SK-N-SH (cell line): ENCODE measurements at regions of chr7 and their contacts with region 1.

Region 1: DNA sequence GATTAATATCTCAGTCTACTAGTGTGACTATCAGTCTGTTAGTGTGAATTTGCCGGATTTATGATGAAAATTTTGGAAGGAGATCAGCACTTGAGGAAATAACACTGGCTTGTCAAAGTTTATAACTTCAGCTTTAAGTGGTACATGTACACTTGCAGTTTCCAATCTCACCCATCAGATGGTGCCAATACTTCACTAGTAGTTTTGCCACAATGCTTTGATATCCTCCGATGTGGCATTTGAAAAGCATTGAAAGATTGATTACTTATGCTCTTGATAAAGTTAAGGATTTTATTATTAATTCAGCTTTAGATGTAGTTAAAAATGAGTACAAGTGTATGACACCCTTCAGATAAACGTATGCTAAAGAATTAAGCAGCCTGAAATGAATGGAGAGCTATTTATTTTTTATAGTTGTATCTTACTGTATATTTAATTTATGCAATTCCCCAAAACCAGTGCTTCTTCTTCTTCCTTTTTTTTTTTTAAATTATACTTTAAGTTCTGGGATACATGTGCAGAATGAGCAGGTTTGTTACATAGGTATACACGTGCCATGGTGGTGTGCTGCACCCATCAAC is 98.2 kb downstream of the ANLN start:
- DNase-seq: peak; percentile 63
- H3K4me3 ChIP-seq: no peak overlapping the region; a peak in 1 of 4 replicates
- H3K27ac ChIP-seq: no peak overlapping the region
- H3K4me1 ChIP-seq: 0 out of 4 replicates have a peak, but pooled peaks cover 0 to 2% of the 10 kb centered on the region in 2 experiments
- H3K27me3 ChIP-seq: no peaks in the 10 kb centered on the region
- CTCF ChIP-seq: peak; percentile 99
- EP300 ChIP-seq: peak in 1 of 2 experiments; percentile 14; a peak in 1 of 4 replicates
- RAD21 ChIP-seq: peak; percentile 100

Region 2: DNA sequence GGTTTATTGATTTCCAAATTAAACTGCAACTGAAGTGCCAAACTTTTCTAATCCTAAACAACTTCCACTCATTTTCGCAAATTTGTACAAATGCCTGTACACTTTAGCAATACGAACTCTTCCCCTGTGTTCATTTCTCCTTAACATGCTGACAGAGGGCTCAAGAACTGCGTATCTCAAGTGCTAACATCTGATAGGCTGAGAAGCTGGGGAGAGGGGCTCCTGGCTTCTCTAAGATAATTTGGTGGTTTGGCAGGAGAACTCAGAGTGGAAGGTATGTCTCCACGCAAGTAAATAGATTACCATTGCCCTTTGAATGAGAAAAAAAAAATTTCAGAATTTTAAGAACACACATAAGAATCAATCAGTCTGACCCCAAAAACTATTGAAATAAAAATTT is 151.5 kb before region 1 on chr7:
- CTCF ChIA-PET with region 1: no interaction called
- POLR2A ChIA-PET with region 1: no interaction called
- DNase-seq: no peak
- H3K4me3 ChIP-seq: no peak overlapping the region
- H3K27ac ChIP-seq: no peak overlapping the region
- H3K4me1 ChIP-seq: no peaks in the 10 kb centered on the region
- H3K27me3 ChIP-seq: no peaks in the 10 kb centered on the region
- CTCF ChIP-seq: no peak
- EP300 ChIP-seq: no peak
- RAD21 ChIP-seq: no peak

Region 3: DNA sequence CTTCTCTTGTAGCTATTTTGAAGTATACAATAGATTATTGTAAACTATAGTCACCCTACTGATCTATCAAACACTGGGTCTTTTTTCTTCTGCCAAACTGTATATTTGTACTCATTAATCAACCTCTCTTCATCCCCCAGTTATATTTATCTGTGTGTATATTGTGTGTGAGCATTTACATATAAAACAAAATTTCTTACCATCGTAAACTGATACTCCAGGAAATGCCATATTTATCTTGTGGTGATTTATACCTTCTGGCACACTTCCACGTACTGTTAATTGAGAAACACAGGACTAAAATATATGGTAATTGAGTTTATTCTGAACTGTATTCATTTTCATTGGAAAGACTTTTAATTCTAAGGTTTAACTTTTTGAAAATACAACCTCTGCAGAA is 79.3 kb before region 1 on chr7:
- CTCF ChIA-PET with region 1: no interaction called
- POLR2A ChIA-PET with region 1: no interaction called
- DNase-seq: no peak
- H3K4me3 ChIP-seq: no peak overlapping the region
- H3K27ac ChIP-seq: peak overlapping the region in 1 of 2 experiments; percentile 29; a peak in 1 of 4 replicates
- H3K4me1 ChIP-seq: peaks cover 15 to 19% of the 10 kb centered on the region in 2 experiments; a peak in 3 of 4 replicates
- H3K27me3 ChIP-seq: no peaks in the 10 kb centered on the region
- CTCF ChIP-seq: no peak
- EP300 ChIP-seq: no peak
- RAD21 ChIP-seq: no peak

Region 4: GRCh38 chr7:36473454-36474282 is 14.2 kb before region 1 on chr7:
- CTCF ChIA-PET with region 1: interaction called, 24 read pairs
- POLR2A ChIA-PET with region 1: no interaction called
- DNase-seq: peak; percentile 57
- H3K4me3 ChIP-seq: no peak overlapping the region
- H3K27ac ChIP-seq: no peak overlapping the region
- H3K4me1 ChIP-seq: peaks cover 6 to 14% of the 10 kb centered on the region in 2 experiments
- H3K27me3 ChIP-seq: no peaks in the 10 kb centered on the region
- CTCF ChIP-seq: peak; percentile 60
- EP300 ChIP-seq: no peak
- RAD21 ChIP-seq: peak; percentile 86

Region 5: GRCh38 chr7:36659172-36659516 is 171.3 kb after region 1 on chr7:
- CTCF ChIA-PET with region 1: interaction called, 11 read pairs
- POLR2A ChIA-PET with region 1: no interaction called
- DNase-seq: no peak
- H3K4me3 ChIP-seq: 0 out of 4 replicates have a peak overlapping the region, but pooled peaks of 1 of the 2 experiments have one; percentile 4
- H3K27ac ChIP-seq: peak overlapping the region in 1 of 2 experiments; percentile 85; a peak in 3 of 4 replicates
- H3K4me1 ChIP-seq: peaks cover 14 to 18% of the 10 kb centered on the region in 2 experiments
- H3K27me3 ChIP-seq: no peaks in the 10 kb centered on the region
- CTCF ChIP-seq: no peak
- EP300 ChIP-seq: no peak
- RAD21 ChIP-seq: no peak

Region 6: GRCh38 chr7:36863901-36864701 is 376.3 kb after region 1 on chr7:
- CTCF ChIA-PET with region 1: interaction called, 12 read pairs
- POLR2A ChIA-PET with region 1: no interaction called
- DNase-seq: peak; percentile 40
- H3K4me3 ChIP-seq: no peak overlapping the region; a peak in 1 of 4 replicates
- H3K27ac ChIP-seq: peak overlapping the region in 1 of 2 experiments; percentile 95; a peak in 2 of 4 replicates
- H3K4me1 ChIP-seq: peaks cover 0 to 21% of the 10 kb centered on the region in 2 experiments; a peak in 2 of 4 replicates
- H3K27me3 ChIP-seq: no peaks in the 10 kb centered on the region
- CTCF ChIP-seq: no peak
- EP300 ChIP-seq: peak in 1 of 2 experiments; percentile 83; a peak in 1 of 4 replicates
- RAD21 ChIP-seq: peak; percentile 16; the same call in 1 of the 2 replicates

Region 7: GRCh38 chr7:37007268-37007667 is 519.4 kb after region 1 on chr7:
- CTCF ChIA-PET with region 1: interaction called, 11 read pairs
- POLR2A ChIA-PET with region 1: no interaction called
- DNase-seq: no peak
- H3K4me3 ChIP-seq: no peak overlapping the region
- H3K27ac ChIP-seq: peak overlapping the region in 1 of 2 experiments; percentile 30; a peak in 2 of 4 replicates
- H3K4me1 ChIP-seq: peaks cover 0 to 48% of the 10 kb centered on the region in 2 experiments; a peak in 2 of 4 replicates
- H3K27me3 ChIP-seq: peaks cover 31% of the 10 kb centered on the region
- CTCF ChIP-seq: no peak
- EP300 ChIP-seq: no peak
- RAD21 ChIP-seq: no peak

Region 8: DNA sequence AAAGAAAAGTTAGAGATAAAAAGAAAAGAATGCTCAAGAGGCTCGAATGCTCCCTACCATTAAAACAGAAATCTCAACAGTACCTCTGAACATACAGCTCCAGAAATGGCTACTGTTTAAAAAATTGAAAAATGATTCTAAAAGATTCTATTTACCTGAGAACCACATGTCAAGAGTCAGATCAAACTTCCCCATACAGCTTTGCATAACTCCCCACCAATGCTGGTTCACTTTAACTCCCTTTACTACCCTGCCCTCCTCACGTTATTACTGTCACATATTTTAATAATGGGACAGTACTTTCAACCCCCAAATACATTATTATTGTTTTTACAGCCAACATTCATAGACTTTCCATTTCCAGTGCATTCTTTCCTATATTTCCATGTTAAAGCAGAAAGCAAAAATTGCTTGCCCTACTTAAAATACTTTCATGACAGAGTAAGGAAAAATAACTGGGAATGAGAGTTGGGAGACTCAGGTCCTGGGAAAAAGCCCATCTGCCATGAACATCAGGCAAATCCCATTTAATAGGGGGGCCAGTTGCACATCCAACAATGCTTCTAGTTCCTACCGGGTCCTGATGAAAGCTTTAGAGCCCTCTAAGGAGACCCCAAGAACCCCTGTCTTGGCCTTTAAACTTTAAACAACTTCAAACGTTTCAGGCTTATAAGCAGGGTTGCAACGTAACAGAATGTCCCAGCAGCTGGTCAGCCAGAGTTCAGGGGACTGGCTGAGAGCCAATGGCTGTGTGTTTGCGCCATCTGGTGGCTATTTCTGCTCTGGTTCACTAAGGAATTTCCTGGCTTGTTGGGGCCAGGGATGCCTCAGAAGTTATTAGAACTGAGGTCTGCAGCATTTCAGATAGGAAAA is 713.4 kb after region 1 on chr7:
- CTCF ChIA-PET with region 1: interaction called, 306 read pairs
- POLR2A ChIA-PET with region 1: interaction called, 4 read pairs
- DNase-seq: peak; percentile 83
- H3K4me3 ChIP-seq: no peak overlapping the region
- H3K27ac ChIP-seq: no peak overlapping the region
- H3K4me1 ChIP-seq: peaks cover 0 to 15% of the 10 kb centered on the region in 2 experiments; a peak in 2 of 4 replicates
- H3K27me3 ChIP-seq: no peaks in the 10 kb centered on the region
- CTCF ChIP-seq: peak; percentile 99
- EP300 ChIP-seq: peak in 1 of 2 experiments; percentile 26; a peak in 1 of 4 replicates
- RAD21 ChIP-seq: peak; percentile 91